Keratinocyte (primary cell): ENCODE measurements at regions of chr3 and their contacts with region 1.

Region 1: GRCh38 chr3:196274585-196274984 is 12.9 kb downstream of the PCYT1A start:
- DNase-seq: no peak
- H3K4me3 ChIP-seq: no peak overlapping the region
- H3K27ac ChIP-seq: peak overlapping the region; percentile 29
- H3K4me1 ChIP-seq: peaks cover 22% of the 10 kb centered on the region
- H3K27me3 ChIP-seq: no peaks in the 10 kb centered on the region
- CTCF ChIP-seq: no peak

Region 2: GRCh38 chr3:196096382-196096953 is 178.1 kb before region 1 on chr3:
- dilution Hi-C with region 1: no loop called
- DNase-seq: no peak
- H3K4me3 ChIP-seq: no peak overlapping the region
- H3K27ac ChIP-seq: no peak overlapping the region
- H3K4me1 ChIP-seq: peaks cover 4% of the 10 kb centered on the region
- H3K27me3 ChIP-seq: no peaks in the 10 kb centered on the region
- CTCF ChIP-seq: no peak

Region 3: GRCh38 chr3:196227629-196228493 is 46.7 kb before region 1 on chr3:
- dilution Hi-C with region 1: no loop called
- DNase-seq: no peak
- H3K4me3 ChIP-seq: no peak overlapping the region
- H3K27ac ChIP-seq: no peak overlapping the region
- H3K4me1 ChIP-seq: no peaks in the 10 kb centered on the region
- H3K27me3 ChIP-seq: peaks cover 17% of the 10 kb centered on the region
- CTCF ChIP-seq: no peak

Region 4: DNA sequence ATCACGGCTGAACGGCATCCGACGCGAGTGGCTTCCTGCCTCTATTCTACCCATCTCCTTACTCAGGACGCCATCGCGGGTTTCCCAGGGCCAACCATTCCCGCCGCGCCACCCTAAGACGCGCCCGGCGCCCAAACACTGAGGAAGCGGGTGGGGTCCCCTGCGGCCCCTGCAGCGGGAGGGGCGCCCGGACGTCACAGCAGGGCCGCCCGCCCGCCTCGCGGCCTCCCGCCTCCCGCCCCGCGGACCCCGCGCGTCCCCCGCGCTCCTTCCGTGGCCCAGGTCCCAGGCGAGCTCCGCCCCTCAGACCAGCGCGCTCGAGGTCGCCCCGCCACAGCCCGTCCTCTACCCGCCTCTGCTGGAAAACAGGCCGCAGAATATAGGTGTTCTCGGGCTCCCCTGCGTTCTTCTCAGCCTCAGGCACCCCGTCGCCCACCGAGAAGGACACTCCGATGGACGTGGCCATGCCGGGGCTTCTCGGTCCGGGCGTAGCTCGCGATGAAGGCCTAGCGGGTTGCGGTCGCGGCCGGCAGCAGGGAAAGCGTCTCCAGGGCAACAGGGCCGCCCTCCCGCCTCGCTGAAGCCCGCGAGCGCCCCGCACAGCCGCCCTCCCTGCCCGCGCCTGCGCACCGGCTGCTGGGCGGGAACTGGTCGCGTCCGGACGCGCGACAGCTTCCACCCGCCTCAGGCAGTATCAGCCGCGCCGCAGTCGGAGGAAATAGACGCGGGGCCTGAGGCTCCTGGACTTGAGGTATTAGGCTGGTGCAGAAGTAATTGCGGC is 43.3 kb after region 1 on chr3 and contains the start of gene DYNLT2B:
- dilution Hi-C with region 1: no loop called
- DNase-seq: no peak
- H3K4me3 ChIP-seq: peak within 1 kb of the TSS; percentile 79 to 84 (median 82)
- H3K27ac ChIP-seq: peak within 1 kb of the TSS; percentile 88
- H3K4me1 ChIP-seq: peaks cover 31% of the 10 kb centered on the region
- H3K27me3 ChIP-seq: no peaks in the 10 kb centered on the region
- CTCF ChIP-seq: peak in 1 of 3 experiments; percentile 31
- polyA plus RNA-seq, gene DYNLT2B: 24.5 to 40.0 TPM (median 31.1 TPM) in 3 replicates

Region 5: DNA sequence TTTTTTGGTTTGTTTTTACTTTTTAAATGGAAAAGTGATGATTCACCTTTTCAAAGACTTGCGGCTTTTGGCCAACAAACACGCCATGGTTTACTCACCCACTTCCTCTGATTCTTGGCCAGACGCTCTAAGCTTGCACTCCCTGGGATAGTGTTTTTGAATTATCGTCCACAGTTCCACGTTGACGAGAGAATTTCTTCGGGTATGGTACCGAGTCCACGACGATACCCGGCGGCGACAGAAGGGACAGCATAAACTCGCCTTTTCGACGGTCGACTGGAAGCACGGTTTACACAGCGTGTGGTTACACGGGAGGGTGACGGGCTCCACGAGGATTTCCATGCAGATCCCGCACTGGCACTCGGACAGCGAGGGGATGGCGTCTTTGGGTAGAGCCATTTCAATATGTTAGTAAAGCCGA is 228.2 kb after region 1 on chr3:
- dilution Hi-C with region 1: loop called (anchors 25 kb)
- DNase-seq: no peak
- H3K4me3 ChIP-seq: peak overlapping the region; percentile 66 to 96 (median 78)
- H3K27ac ChIP-seq: peak overlapping the region; percentile 87
- H3K4me1 ChIP-seq: peaks cover 17% of the 10 kb centered on the region
- H3K27me3 ChIP-seq: no peaks in the 10 kb centered on the region
- CTCF ChIP-seq: no peak